PC-9 (cell line): ENCODE measurements at regions of chr2 and their contacts with region 1.

Region 1: GRCh38 chr2:222424729-222425671 is 657 bp downstream of the SGPP2 start:
- DNase-seq: peak in 1 of 2 experiments; percentile 26
- H3K4me3 ChIP-seq: peak overlapping the region; percentile 54
- H3K27ac ChIP-seq: no peak overlapping the region
- H3K4me1 ChIP-seq: peaks cover 31% of the 10 kb centered on the region
- H3K27me3 ChIP-seq: no peaks in the 10 kb centered on the region
- CTCF ChIP-seq: no peak

Region 2: DNA sequence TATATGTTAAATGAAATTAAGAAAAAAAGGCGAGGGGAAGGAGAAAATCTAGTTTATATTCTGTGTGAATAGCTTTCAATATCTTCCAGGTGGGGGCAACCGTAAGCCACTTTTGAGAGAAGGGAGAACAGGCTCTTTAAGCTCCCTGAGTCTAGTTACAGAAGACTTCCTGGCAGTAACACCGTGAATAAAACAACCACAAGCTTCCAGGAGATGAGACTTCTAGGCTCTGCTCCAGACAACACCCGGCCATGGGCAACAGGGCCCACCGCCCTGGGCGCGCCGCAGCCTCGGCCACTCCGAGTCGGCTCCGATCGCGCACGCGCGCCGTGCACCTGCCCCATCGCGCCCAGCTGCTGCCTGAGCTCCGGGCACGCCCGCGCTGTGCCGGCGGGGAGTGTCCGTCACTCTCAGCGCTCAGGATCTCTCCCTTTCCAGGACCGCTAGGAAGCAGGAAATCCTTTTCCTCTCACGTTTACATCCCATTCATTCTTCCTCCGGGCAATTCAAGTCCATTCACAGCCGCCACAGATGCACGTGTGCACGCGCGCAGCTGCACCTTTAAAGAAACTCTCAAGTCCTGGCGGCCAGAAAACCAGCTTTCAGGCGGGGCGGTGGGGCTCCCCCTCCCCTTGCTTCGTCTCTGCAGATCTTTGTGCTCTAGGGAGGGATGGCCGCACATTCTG is 106.8 kb before region 1 on chr2:
- CTCF ChIA-PET with region 1: no interaction called
- POLR2A ChIA-PET with region 1: no interaction called
- intact Hi-C with region 1: loop called (anchors 5 kb)
- DNase-seq: peak; percentile 74 to 89
- H3K4me3 ChIP-seq: peak overlapping the region; percentile 79
- H3K27ac ChIP-seq: no peak overlapping the region
- H3K4me1 ChIP-seq: peaks cover 5% of the 10 kb centered on the region; the same call in 1 of the 2 replicates
- H3K27me3 ChIP-seq: peaks cover 13% of the 10 kb centered on the region; the same call in 1 of the 2 replicates
- CTCF ChIP-seq: peak; percentile 87

Region 3: DNA sequence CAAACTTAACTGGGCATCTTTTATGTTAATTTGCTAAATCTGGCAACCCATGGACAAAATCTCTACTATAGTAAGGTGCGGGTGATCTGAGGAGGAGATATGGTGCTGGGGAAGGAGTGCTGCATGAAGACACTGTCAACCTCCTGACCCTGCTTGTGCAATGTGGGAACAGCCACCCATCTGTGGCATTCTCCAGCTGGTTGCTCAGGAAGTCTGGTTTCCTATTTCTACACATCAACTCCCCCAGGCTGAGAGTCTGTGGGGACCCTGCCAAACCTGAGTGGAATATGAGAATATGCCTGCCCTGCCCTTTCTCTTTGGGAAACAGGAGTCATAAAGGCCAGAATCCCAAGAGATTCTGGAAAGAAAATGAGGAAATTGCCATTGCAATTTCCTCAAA is 66.1 kb before region 1 on chr2:
- CTCF ChIA-PET with region 1: no interaction called
- POLR2A ChIA-PET with region 1: no interaction called
- intact Hi-C with region 1: loop called (anchors 5 kb)
- DNase-seq: peak in 1 of 2 experiments; percentile 33
- H3K4me3 ChIP-seq: no peak overlapping the region
- H3K27ac ChIP-seq: no peak overlapping the region
- H3K4me1 ChIP-seq: 0 out of 2 replicates have a peak, but pooled peaks cover under 1% of the 10 kb centered on the region
- H3K27me3 ChIP-seq: no peaks in the 10 kb centered on the region
- CTCF ChIP-seq: no peak

Region 4: GRCh38 chr2:222468346-222468745 is 43.3 kb after region 1 on chr2:
- CTCF ChIA-PET with region 1: no interaction called
- POLR2A ChIA-PET with region 1: no interaction called
- intact Hi-C with region 1: no loop called
- DNase-seq: peak in 1 of 2 experiments; percentile 14
- H3K4me3 ChIP-seq: no peak overlapping the region
- H3K27ac ChIP-seq: no peak overlapping the region
- H3K4me1 ChIP-seq: peaks cover 14% of the 10 kb centered on the region; the same call in 1 of the 2 replicates
- H3K27me3 ChIP-seq: no peaks in the 10 kb centered on the region
- CTCF ChIP-seq: no peak

Region 5: DNA sequence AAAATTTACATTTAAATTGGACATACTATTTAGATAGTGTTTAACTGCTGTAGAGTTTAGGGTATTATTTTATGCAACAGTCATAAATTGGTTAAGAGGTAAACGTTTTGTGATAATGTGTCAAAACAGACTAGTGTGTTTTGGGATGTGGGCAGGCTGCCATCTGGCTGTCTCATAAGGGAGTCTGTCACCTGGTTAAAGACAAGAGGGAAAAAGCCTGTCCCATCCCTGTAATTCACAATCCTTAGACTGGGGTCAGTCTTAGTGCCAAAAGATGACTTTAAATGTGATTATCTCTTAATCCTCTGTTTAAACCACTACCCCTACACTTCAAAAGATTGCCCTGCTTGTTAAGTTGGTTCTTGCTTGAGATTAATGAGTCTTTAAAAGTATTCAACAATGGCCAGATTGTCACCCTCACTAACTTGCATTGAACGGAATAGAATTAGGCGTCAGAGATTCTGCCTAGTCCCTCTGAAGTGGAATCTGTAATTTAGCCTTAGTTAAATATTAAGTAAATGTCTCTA is 58.6 kb after region 1 on chr2:
- CTCF ChIA-PET with region 1: no interaction called
- POLR2A ChIA-PET with region 1: interaction called, 4 read pairs
- intact Hi-C with region 1: loop called (anchors 5 kb)
- DNase-seq: peak in 1 of 2 experiments; percentile 26
- H3K4me3 ChIP-seq: no peak overlapping the region
- H3K27ac ChIP-seq: no peak overlapping the region
- H3K4me1 ChIP-seq: no peaks in the 10 kb centered on the region
- H3K27me3 ChIP-seq: no peaks in the 10 kb centered on the region
- CTCF ChIP-seq: peak; percentile 35

Region 6: DNA sequence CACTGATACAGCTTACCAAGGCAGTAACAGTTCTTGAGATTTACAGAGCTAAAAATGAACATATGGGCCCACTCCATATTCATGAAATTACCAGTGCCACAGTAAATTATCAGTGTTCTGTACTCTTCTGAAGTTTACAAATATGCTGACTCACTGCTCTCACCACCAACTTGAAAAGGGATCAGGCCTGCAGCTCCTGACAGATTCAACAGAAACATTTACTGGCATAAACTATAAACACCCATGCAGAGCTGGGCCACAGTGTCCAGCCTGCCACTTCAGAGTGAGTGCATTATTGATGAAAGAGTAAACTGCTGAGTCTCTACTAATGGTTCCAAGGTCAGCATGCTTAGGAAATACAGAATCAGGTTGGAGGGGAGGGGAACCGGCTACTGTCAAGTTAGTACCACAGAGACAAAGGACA is 147.8 kb after region 1 on chr2:
- CTCF ChIA-PET with region 1: no interaction called
- POLR2A ChIA-PET with region 1: no interaction called
- intact Hi-C with region 1: loop called (anchors 5 kb)
- DNase-seq: no peak
- H3K4me3 ChIP-seq: peak overlapping the region; percentile 3; the same call in 1 of the 2 replicates
- H3K27ac ChIP-seq: peak overlapping the region; percentile 87
- H3K4me1 ChIP-seq: peaks cover 65% of the 10 kb centered on the region
- H3K27me3 ChIP-seq: no peaks in the 10 kb centered on the region
- CTCF ChIP-seq: no peak